PC-9 (cell line): ENCODE measurements at regions of chr7 and their contacts with region 1.

Region 1: DNA sequence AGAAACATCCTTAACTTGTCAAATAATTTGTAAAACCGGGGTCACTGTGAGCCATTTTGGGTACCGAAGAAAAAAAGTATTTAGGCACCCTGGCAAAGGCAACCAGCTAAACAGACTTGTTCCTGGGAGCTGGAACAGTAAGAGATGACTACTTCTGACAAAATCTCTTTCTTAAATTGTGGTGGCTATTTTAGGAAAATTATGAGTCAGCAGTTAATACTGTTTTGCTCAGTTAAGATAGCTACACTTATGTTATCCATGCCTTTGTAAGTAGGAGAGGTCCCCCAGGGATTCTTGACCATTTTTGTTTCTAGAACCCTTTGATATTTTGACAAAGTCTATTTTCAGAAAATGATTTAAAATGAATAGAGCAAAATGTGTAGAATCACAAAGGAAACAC is 68.7 kb downstream of the TAX1BP1 start:
- DNase-seq: no peak
- H3K4me3 ChIP-seq: no peak overlapping the region
- H3K27ac ChIP-seq: no peak overlapping the region
- H3K4me1 ChIP-seq: no peaks in the 10 kb centered on the region
- H3K27me3 ChIP-seq: no peaks in the 10 kb centered on the region
- CTCF ChIP-seq: no peak

Region 2: DNA sequence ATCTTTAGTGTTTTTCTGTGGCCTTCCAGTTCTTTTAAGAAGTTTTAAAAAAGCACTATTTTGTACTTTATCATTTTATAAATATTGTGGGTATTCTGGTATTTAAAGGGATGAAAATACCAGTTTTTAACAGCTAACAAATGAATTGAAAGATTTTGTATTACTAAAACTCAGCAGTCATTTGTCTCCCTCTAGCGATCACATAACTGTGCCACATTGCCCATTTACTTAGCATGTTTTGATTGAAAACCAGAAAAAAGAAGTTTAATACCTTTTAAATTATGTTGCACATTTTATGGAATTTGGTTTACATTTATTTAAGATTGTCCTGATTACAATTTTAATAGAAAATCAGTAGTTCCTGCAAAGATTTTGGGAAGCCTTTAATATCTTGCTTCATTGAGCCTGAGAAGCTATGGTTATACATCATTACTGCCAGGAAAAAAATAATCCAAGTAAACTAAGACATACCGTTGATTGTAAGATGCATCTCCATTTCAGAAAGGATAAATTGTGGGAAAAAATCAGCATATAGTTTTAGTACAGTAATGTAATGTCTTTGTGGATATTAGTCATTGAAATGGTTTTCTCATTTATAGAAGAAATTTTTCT is 33.8 kb before region 1 on chr7:
- CTCF ChIA-PET with region 1: no interaction called
- POLR2A ChIA-PET with region 1: no interaction called
- intact Hi-C with region 1: no loop called
- DNase-seq: no peak
- H3K4me3 ChIP-seq: no peak overlapping the region
- H3K27ac ChIP-seq: no peak overlapping the region
- H3K4me1 ChIP-seq: peaks cover 23% of the 10 kb centered on the region
- H3K27me3 ChIP-seq: no peaks in the 10 kb centered on the region
- CTCF ChIP-seq: peak; percentile 88

Region 3: DNA sequence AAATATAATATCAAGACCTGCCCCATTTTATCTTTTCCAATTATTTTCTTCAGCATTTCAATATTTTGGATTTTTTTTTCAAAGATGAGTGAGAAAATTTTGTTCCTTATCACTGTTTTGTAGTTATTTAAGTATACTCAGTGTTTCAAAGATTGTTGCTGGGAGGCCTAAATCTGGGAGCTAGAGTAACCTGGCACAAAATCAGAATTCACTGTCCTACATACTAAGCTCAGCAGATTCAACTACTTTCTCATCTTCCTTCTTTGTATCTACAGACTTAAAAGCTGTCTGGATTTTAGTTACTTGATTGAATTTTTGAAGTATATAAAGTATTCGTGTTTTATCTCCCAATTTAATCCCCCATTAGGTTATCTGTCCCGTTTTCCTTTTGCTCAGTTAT is 17.3 kb after region 1 on chr7:
- CTCF ChIA-PET with region 1: no interaction called
- POLR2A ChIA-PET with region 1: no interaction called
- intact Hi-C with region 1: no loop called
- DNase-seq: no peak
- H3K4me3 ChIP-seq: no peak overlapping the region
- H3K27ac ChIP-seq: no peak overlapping the region
- H3K4me1 ChIP-seq: no peaks in the 10 kb centered on the region
- H3K27me3 ChIP-seq: no peaks in the 10 kb centered on the region
- CTCF ChIP-seq: no peak

Region 4: GRCh38 chr7:27970350-27970749 is 161.7 kb after region 1 on chr7:
- CTCF ChIA-PET with region 1: no interaction called
- POLR2A ChIA-PET with region 1: interaction called, 10 read pairs
- intact Hi-C with region 1: no loop called
- DNase-seq: no peak
- H3K4me3 ChIP-seq: no peak overlapping the region
- H3K27ac ChIP-seq: no peak overlapping the region
- H3K4me1 ChIP-seq: no peaks in the 10 kb centered on the region
- H3K27me3 ChIP-seq: no peaks in the 10 kb centered on the region
- CTCF ChIP-seq: no peak